ENCODE measurements at regions of chr9 and their contacts with region 1.

Region 1: GRCh38 chr9:91001146-91001611 is 199.6 kb downstream of the SYK start:
- DNase-seq: peak; percentile 94 to 98
- H3K4me3 ChIP-seq: no peak overlapping the region
- H3K27ac ChIP-seq: peak overlapping the region; percentile 74
- H3K4me1 ChIP-seq: peaks cover 22% of the 10 kb centered on the region
- H3K27me3 ChIP-seq: no peaks in the 10 kb centered on the region
- CTCF ChIP-seq: no peak

Region 2: GRCh38 chr9:90925581-90926257 is 75.5 kb before region 1 on chr9:
- CTCF ChIA-PET with region 1: no interaction called
- POLR2A ChIA-PET with region 1: interaction called, 25 read pairs
- intact Hi-C with region 1: no loop called
- DNase-seq: no peak
- H3K4me3 ChIP-seq: no peak overlapping the region
- H3K27ac ChIP-seq: no peak overlapping the region
- H3K4me1 ChIP-seq: 0 out of 2 replicates have a peak, but pooled peaks cover 5% of the 10 kb centered on the region
- H3K27me3 ChIP-seq: no peaks in the 10 kb centered on the region
- CTCF ChIP-seq: no peak

Region 3: DNA sequence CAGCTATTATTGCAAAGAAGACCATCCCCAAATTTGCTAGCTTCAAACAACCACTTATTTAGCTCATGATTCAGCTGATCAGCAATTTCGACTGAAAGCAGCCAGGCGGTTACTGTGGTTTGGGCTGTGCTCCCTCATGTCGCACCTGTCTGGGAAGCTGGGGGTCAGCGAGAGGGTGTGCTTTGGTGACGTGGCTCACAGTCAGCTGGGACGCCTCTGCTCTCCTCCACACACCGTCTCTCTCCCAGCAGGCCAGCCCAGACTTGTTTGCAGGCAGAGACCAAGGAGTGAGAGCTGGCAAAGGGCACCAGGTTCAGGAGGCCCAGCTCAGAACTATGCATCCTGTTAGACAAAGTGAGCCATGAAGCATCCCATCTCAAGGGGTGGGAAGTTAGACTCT is 58.6 kb before region 1 on chr9:
- CTCF ChIA-PET with region 1: no interaction called
- POLR2A ChIA-PET with region 1: no interaction called
- intact Hi-C with region 1: loop called (anchors 1 kb)
- DNase-seq: peak in 1 of 2 experiments; percentile 73
- H3K4me3 ChIP-seq: no peak overlapping the region
- H3K27ac ChIP-seq: no peak overlapping the region
- H3K4me1 ChIP-seq: peaks cover 31% of the 10 kb centered on the region
- H3K27me3 ChIP-seq: no peaks in the 10 kb centered on the region
- CTCF ChIP-seq: no peak

Region 4: DNA sequence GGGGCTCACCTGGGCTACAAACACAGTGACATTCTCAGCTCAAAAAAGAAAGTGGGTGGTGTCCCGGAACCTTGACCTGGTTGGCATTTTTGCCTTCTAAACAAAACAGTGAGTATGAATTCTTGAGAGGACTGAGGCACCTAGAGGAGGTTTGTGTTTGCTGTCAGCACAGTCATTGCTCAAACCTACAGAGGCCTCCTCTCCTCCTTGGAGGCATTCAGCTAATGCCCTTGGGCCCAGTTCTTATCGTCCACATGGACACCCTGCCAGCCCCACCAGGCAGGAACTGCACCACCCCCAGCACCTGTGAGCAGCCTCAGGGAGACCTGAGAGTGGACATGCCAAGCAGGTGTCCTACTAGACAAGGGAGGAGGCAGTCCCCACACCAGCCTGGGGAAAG is 42.9 kb before region 1 on chr9:
- CTCF ChIA-PET with region 1: no interaction called
- POLR2A ChIA-PET with region 1: no interaction called
- intact Hi-C with region 1: loop called (anchors 1 kb)
- DNase-seq: peak; percentile 68 to 82
- H3K4me3 ChIP-seq: no peak overlapping the region
- H3K27ac ChIP-seq: peak overlapping the region; percentile 36
- H3K4me1 ChIP-seq: peaks cover 35% of the 10 kb centered on the region
- H3K27me3 ChIP-seq: no peaks in the 10 kb centered on the region
- CTCF ChIP-seq: no peak

Region 5: GRCh38 chr9:91023741-91024140 is 22.6 kb after region 1 on chr9:
- CTCF ChIA-PET with region 1: no interaction called
- POLR2A ChIA-PET with region 1: no interaction called
- intact Hi-C with region 1: no loop called
- DNase-seq: no peak
- H3K4me3 ChIP-seq: no peak overlapping the region
- H3K27ac ChIP-seq: no peak overlapping the region
- H3K4me1 ChIP-seq: no peaks in the 10 kb centered on the region
- H3K27me3 ChIP-seq: no peaks in the 10 kb centered on the region
- CTCF ChIP-seq: no peak

Region 6: GRCh38 chr9:91060503-91061343 is 59.5 kb after region 1 on chr9:
- CTCF ChIA-PET with region 1: no interaction called
- POLR2A ChIA-PET with region 1: interaction called, 3 read pairs
- intact Hi-C with region 1: loop called (anchors 1 kb)
- DNase-seq: peak; percentile 78 to 93
- H3K4me3 ChIP-seq: peak overlapping the region; percentile 35; the same call in 1 of the 2 replicates
- H3K27ac ChIP-seq: peak overlapping the region; percentile 86
- H3K4me1 ChIP-seq: peaks cover 48% of the 10 kb centered on the region
- H3K27me3 ChIP-seq: no peaks in the 10 kb centered on the region
- CTCF ChIP-seq: no peak

Region 7: DNA sequence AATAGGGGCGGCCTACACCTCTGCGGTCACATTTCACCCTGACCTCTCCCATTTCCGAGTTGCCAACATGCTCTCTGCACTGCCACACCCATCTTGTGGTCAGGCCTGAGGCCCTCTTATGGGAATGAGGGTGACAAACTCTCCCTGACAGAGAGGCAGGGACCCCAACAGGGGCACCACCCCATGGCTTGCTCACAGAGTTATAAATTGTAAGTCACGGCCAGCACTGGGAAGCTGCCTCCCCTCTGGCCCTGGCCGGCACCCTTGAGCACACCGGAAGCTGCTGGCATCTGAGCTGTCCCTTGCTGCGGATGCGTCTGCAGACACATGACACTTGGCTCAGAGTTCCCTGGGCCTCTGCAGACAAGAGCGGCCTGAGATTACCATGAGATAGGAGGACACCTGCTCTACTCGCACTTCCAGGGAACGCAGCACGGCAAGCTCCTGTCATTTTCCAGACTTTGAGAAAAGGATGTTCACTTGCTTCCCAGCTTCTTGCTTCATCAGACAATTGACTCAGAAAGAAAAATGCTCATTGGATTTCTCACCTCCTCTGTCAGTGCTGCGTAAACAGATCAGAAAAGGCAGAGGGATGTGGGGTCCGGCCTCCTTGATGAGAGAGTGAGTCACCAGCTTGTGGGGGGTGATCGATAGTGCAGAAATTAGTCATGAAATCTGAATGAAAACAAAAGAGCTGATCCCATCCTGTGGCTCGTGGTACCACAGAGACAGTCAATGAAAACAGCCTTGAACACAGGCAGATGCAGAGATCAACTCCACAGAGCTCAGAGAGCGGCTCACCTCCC is 70.2 kb after region 1 on chr9:
- CTCF ChIA-PET with region 1: no interaction called
- POLR2A ChIA-PET with region 1: no interaction called
- intact Hi-C with region 1: loop called (anchors 2 kb)
- DNase-seq: peak; percentile 82 to 94
- H3K4me3 ChIP-seq: peak overlapping the region; percentile 23; the same call in 1 of the 2 replicates
- H3K27ac ChIP-seq: peak overlapping the region; percentile 87
- H3K4me1 ChIP-seq: peaks cover 23% of the 10 kb centered on the region
- H3K27me3 ChIP-seq: no peaks in the 10 kb centered on the region
- CTCF ChIP-seq: no peak

Region 8: GRCh38 chr9:91978739-91979414 is 977.7 kb after region 1 on chr9:
- CTCF ChIA-PET with region 1: no interaction called
- POLR2A ChIA-PET with region 1: no interaction called
- intact Hi-C with region 1: no loop called
- DNase-seq: peak in 1 of 2 experiments; percentile 12
- H3K4me3 ChIP-seq: no peak overlapping the region
- H3K27ac ChIP-seq: no peak overlapping the region
- H3K4me1 ChIP-seq: no peaks in the 10 kb centered on the region
- H3K27me3 ChIP-seq: peaks cover 20% of the 10 kb centered on the region; the same call in 1 of the 2 replicates
- CTCF ChIP-seq: peak; percentile 37; the same call in 1 of the 2 replicates

Measured in PC-9 (cell line).